Mammary epithelial cell (primary cell): ENCODE measurements at regions of chr20 and their contacts with region 1.

Region 1: DNA sequence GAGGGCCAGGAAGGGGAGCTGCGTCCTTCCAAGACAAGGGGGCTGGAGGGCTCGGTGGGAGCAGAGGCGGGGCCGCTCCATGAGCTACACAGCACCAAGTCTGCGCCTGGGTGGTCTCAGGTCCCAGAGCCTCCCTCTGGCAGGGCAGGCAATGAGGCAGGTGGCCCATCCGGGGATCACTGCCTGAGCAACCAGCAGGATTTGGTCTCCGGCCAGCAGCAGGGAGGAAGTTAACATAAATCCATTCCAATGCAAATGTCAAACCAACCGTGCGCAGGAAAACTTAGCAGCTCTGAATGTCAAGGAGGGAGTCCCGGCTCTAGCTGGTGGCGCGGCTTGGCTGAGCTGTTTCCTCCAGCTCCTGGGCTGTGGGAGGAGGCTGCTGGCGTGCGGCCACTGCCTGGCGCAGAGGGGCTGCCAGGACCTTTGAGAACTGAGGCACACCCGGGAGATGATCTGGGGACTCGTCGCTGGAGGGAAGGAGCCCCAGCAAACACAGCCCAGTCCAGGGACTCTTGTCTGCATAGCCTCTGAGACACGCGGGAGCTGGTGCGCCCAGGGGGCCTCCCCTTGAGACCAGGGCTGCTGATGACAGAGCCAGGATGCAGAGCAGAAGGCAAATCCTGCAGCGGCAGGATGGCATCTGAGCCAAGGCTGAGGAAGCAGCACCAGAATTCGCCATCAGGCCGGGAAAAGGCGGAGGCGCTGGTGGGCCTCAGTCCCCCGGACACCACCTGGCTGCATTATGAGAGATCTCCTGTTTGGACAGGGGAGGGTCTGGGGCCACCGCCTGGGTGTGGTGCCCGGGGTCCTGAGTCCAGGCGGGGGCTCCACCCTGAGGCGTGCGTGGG is 33.1 kb upstream of the CHRNA4 start:
- DNase-seq: no peak
- H3K4me3 ChIP-seq: no peak overlapping the region
- H3K27ac ChIP-seq: no peak overlapping the region
- H3K4me1 ChIP-seq: no peaks in the 10 kb centered on the region
- H3K27me3 ChIP-seq: peaks cover 4% of the 10 kb centered on the region
- CTCF ChIP-seq: no peak

Region 2: DNA sequence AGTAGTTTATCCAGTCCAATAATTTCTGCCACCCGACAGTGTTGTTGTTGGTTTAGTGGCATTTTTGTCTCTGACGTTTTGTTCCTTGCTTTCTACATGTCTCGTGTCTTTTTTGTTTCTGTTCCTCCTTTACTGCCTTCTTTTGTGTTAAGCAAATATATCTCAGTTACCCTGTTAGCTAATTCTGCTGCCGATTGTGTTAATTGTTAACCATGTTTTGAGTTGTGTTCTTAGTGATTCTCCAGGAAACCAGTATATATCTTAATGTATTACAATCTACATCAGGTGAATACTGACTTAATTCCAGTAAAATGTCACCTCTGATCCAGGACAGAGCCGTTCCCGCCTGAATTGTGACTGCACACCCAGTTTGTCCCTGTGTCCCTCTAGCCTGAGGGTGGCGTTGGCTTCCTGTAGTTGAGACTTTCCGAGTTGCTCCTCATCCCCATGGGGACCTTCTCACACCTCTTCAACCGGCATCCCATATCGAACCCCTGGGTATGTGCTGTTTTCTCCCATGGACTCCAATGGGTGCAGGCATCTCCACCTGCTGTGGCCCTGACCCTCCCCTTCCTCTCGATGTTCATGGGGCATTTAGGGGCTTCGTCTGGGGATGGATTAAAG is 351.7 kb before region 1 on chr20:
- CTCF ChIA-PET with region 1: no interaction called
- dilution Hi-C with region 1: no loop called
- in situ Hi-C with region 1: no loop called
- intact Hi-C with region 1: no loop called
- DNase-seq: no peak
- H3K4me3 ChIP-seq: no peak overlapping the region
- H3K27ac ChIP-seq: no peak overlapping the region
- H3K4me1 ChIP-seq: no peaks in the 10 kb centered on the region
- H3K27me3 ChIP-seq: no peaks in the 10 kb centered on the region
- CTCF ChIP-seq: no peak

Region 3: GRCh38 chr20:63149531-63150192 is 244.6 kb before region 1 on chr20:
- CTCF ChIA-PET with region 1: no interaction called
- dilution Hi-C with region 1: loop called (anchors 10 kb)
- in situ Hi-C with region 1: no loop called
- intact Hi-C with region 1: no loop called
- DNase-seq: no peak
- H3K4me3 ChIP-seq: no peak overlapping the region
- H3K27ac ChIP-seq: no peak overlapping the region
- H3K4me1 ChIP-seq: no peaks in the 10 kb centered on the region
- H3K27me3 ChIP-seq: peaks cover 6% of the 10 kb centered on the region
- CTCF ChIP-seq: no peak

Region 4: DNA sequence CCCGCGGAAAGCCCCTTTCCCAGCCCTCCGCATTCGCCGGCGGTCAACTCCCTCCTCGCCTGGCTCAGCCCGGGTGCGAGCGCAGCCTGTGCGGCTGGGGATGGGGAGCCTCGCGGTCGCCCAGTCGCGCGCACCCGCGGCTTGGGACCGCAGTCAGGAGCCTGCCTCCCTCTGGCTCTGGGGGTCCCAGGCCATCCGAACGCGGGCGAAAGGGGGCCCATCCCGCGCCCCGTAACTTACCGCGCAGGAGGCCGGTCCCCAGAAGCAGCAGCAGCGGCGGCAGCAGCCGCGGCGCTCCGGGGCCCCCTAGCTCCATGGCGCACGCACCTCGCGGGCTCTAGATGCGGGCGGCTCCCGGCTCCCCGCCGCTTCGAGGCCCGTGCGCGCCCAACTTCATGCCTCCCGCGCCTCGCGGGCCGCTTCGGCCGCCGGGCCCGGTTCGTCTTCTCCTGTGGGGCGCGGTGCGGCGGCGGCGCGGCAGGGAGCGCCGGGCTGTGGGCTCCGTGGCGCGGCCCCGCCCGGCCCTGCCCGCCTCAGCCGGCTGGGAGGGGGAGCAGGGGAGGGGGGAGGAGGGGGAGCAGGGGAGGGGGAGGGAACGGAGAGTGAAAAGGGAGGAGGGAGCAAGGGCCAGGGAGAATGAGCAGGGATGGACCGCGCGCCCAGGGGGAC is 33.3 kb before region 1 on chr20 and contains the start of gene CHRNA4:
- CTCF ChIA-PET with region 1: no interaction called
- dilution Hi-C with region 1: no loop called
- in situ Hi-C with region 1: no loop called
- intact Hi-C with region 1: no loop called
- DNase-seq: no peak
- H3K4me3 ChIP-seq: no peak within 1 kb of the TSS
- H3K27ac ChIP-seq: no peak within 1 kb of the TSS
- H3K4me1 ChIP-seq: no peaks in the 10 kb centered on the region
- H3K27me3 ChIP-seq: peaks cover 23% of the 10 kb centered on the region
- CTCF ChIP-seq: no peak
- total RNA-seq, gene CHRNA4: not detected

Region 5: DNA sequence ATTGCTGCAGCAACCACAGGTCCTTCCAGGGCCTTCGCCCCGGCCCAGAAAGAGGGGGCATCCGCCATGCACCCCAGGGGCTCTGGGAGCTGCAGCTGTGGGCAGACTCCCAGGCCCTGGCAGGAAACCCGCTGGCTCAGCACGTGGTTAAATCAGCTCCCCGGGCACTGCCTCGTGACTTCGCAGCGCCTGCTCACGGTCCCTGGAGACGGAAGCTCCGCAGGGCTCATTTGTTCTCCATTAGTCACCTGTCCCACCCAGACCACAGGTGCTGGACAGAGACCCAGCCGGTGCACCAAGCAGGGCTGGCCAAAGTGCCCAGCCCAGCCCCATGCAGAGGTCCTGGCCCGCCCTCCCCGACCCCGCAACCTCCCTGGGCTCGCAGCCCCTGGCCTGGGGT is 63.4 kb after region 1 on chr20:
- CTCF ChIA-PET with region 1: no interaction called
- dilution Hi-C with region 1: loop called (anchors 5 kb)
- in situ Hi-C with region 1: no loop called
- intact Hi-C with region 1: no loop called
- DNase-seq: peak; percentile 75
- H3K4me3 ChIP-seq: no peak overlapping the region
- H3K27ac ChIP-seq: no peak overlapping the region
- H3K4me1 ChIP-seq: peaks cover 31% of the 10 kb centered on the region
- H3K27me3 ChIP-seq: peaks cover 2% of the 10 kb centered on the region
- CTCF ChIP-seq: no peak